GM18951 (cell line): ENCODE measurements at regions of chr18 and their contacts with region 1.

Region 1: GRCh38 chr18:47756364-47757016 is 174.0 kb downstream of the SMAD2 start:
- POLR2A ChIP-seq: no peak

Region 2: GRCh38 chr18:47215554-47216138 is 540.8 kb before region 1 on chr18:
- in situ Hi-C with region 1: loop called (anchors 10 kb)
- POLR2A ChIP-seq: no peak